Right cardiac atrium (tissue), 5 donors: ENCODE measurements at regions of chr2 and their contacts with region 1.

Region 1: GRCh38 chr2:38602732-38603401 is at the start of gene HNRNPLL:
- DNase-seq: peak; percentile 98 to 100 (median 99)
- ATAC-seq: peak; percentile 97
- H3K4me3 ChIP-seq: peak within 1 kb of the TSS; percentile 92
- H3K27ac ChIP-seq: peak within 1 kb of the TSS; percentile 96
- H3K4me1 ChIP-seq: peaks cover 3% of the 10 kb centered on the region
- H3K27me3 ChIP-seq: no peaks in the 10 kb centered on the region
- total RNA-seq, gene HNRNPLL: 33.3 to 38.7 (median 34.9) TPM

Region 2: DNA sequence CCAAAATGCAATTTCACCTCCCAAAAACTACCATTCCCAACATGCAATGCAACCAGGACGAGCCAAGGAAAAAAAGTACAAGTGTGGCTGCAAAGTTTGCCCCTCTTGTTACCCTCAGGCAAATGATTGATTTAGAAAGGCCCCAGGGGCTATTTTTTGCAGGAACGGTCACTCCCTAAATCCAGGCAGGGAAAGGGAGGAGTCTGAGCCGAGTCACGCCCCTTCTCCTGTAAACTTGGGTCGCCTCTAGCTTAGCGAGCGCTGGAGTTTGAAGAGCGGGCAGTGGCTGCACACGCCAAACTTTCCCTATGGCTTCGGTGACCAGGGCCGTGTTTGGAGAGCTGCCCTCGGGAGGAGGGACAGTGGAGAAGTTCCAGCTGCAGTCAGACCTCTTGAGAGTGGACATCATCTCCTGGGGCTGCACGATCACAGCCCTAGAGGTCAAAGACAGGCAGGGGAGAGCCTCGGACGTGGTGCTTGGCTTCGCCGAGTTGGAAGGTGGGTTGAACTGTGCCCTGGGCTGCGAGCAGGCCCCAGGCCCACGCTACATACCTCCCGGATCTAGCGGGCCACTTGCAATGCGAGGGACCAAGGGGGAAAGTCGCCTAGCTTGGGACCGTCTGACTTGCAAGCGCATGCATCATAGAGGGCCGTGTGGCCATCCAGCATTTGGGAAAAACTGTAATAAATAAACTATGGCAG is 63.1 kb after region 1 on chr2 and contains the start of gene GALM:
- intact Hi-C with region 1: loop called in 1 of 4 experiments (anchors 5 kb)
- DNase-seq: peak; percentile 83 to 93 (median 92)
- ATAC-seq: peak; percentile 96 to 97
- H3K4me3 ChIP-seq: peak within 1 kb of the TSS; percentile 67
- H3K27ac ChIP-seq: peak within 1 kb of the TSS; percentile 86
- H3K4me1 ChIP-seq: no peaks in the 10 kb centered on the region
- H3K27me3 ChIP-seq: no peaks in the 10 kb centered on the region
- total RNA-seq, gene GALM: 11.4 to 23.0 (median 19.8) TPM

Region 3: DNA sequence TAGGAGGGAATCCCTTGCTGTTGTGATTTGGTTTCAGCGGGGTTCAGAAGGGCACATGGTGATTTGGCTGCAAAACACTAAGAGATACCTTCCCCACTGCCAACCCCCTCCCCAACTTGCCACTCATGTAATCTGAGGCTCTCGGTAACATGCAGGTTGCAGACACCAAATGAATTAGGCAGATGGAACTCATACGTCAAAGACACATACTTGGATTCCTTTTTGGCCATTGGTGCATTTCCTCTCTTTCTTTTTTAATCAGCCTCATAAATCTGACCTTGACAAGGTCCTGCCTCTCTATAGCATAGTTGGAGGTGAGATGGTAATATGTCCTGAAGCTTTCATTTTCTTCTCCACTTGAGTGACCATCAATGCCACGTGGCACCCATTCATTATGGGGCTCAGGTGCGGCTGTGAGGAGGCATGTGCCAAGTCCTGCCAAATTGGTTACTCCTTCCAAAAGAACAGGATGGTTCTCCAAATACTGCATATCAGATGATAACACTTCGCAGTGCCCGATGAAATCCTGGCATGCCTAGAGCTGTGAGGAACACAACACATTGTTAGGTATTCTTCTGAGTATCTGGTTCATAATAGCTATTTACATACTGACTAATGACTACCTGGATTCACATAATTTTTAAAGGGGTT is 1054.5 kb after region 1 on chr2:
- intact Hi-C with region 1: no loop called
- DNase-seq: no peak
- ATAC-seq: no peak
- H3K4me3 ChIP-seq: no peak overlapping the region
- H3K27ac ChIP-seq: no peak overlapping the region
- H3K4me1 ChIP-seq: peaks cover 3% of the 10 kb centered on the region
- H3K27me3 ChIP-seq: no peaks in the 10 kb centered on the region